Heart right ventricle (tissue), 16 donors: ENCODE measurements at regions of chr1 and their contacts with region 1.

Region 1: DNA sequence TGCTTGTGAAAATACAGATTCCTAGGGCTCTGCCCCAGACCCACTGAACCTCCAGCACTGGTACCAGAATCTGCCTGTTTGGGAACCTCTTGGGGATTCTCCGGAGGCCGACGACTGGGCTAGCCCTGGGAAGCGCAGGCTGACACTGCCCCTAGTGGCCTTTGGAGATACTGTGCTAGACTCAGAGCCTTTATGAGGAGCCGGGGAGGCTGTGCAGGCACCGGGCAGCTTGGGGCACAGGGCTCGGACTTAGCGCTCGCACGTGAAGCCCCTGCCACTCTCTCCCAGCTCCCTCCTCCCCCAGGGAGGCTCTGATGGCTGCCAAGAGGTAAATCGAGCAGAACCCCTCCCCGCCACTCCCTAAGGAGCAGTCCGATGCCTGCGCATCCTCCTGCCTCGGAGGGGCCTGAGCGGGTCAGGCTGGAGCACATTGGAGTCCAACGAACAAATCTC is 144.6 kb upstream of the TNR start:
- DNase-seq: peak; percentile 52 to 61
- ATAC-seq: peak; percentile 85 to 92 (median 88)
- H3K4me3 ChIP-seq: no peak overlapping the region
- H3K27ac ChIP-seq: no peak overlapping the region
- H3K4me1 ChIP-seq: peaks cover 0 to 13% (median 0%) of the 10 kb centered on the region in 9 donors
- H3K27me3 ChIP-seq: no peaks in the 10 kb centered on the region
- CTCF ChIP-seq: peak; percentile 63 to 85 (median 81)

Region 2: DNA sequence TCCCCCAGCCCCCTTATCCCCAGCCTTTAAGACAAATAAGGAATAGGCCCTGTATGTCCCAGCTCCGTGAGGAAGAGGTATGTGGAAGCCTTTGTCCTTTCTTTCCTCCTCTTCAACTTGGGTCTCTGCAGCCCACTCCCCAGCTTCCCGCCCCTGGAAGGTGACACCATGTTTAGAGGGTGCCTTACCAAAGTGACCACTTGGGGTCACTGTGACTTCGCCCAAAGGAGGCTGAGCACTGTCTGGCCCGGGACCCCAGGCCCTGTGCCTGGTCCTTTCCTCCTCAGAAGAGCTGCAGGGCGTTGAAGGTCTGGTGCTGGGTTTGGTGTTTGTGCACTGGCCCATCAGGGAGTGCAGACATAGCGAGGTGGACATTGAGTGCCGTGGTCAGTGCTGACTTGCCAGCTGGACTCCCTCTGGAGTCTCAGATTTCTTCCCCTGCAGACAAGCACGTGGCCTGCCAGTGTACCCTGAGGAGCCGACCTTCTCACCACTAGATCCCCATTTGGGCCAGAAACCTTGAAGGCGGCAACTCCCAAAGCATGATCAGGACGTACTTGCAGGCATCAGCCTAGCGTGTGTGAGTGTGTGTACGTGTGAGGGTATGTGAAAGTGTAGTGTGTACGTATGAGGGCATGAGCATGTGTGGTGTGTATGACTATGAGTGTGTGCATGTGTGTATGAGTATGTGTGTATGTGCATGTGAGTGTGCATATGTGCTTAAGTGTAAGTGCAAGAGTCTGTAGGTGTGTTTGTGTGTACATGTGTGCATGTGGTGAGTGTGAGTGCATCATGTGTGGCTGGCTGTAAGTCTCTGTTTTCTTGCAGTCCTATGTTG is 514.0 kb before region 1 on chr1:
- intact Hi-C with region 1: loop called in 2 of 10 experiments (anchors 5 kb)
- DNase-seq: no peak
- ATAC-seq: peak in 6 of 8 donors; percentile 52 to 75 (median 62)
- H3K4me3 ChIP-seq: no peak overlapping the region
- H3K27ac ChIP-seq: no peak overlapping the region
- H3K4me1 ChIP-seq: peaks cover 0 to 4% (median 0%) of the 10 kb centered on the region in 9 donors
- H3K27me3 ChIP-seq: peaks cover 0 to 13% (median 0%) of the 10 kb centered on the region in 7 donors
- CTCF ChIP-seq: peak; percentile 46 to 77 (median 69)

Region 3: GRCh38 chr1:175388285-175388684 is 499.7 kb before region 1 on chr1:
- intact Hi-C with region 1: loop called in 1 of 10 experiments (anchors 10 kb)
- DNase-seq: no peak
- ATAC-seq: no peak
- H3K4me3 ChIP-seq: no peak overlapping the region
- H3K27ac ChIP-seq: no peak overlapping the region
- H3K4me1 ChIP-seq: no peaks in the 10 kb centered on the region
- H3K27me3 ChIP-seq: peaks cover 0 to 6% (median 0%) of the 10 kb centered on the region in 7 donors
- CTCF ChIP-seq: no peak

Region 4: DNA sequence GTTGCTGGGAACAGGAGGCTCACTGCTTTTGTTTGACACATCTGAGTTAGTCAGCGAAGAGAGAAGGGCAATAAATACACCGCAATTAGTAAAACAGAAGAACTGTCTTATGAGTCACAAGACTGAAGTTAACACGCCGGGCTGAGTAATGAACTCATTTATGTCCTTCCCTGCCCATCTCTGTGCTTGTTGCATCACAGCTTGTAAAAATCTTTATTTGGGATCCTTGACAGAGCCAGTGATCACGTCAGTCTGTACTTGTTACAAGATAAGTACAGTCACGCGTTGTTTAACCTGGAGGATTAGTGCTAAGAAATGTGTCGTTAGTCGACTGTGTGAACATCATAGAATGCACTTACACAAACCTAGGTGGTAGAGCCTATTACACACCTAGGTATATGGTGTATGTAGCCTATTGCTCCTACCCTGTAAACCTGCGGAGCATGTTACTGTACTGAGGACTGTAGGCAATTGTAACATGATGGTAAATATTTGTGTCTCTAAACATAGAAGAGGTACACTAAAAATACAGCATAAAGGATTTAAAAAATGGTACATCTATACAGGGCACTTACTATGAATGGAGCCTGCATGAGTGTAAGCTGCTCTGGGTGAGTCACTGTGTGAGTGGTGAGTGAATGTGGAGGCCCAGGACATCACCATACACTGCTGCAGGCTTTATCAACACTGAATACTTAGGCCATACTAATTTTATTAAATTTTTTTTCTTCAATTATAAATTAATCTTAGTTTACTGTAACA is 416.8 kb before region 1 on chr1:
- intact Hi-C with region 1: loop called in 2 of 10 experiments (anchors 10 kb)
- DNase-seq: no peak
- ATAC-seq: no peak
- H3K4me3 ChIP-seq: no peak overlapping the region
- H3K27ac ChIP-seq: no peak overlapping the region
- H3K4me1 ChIP-seq: no peaks in the 10 kb centered on the region
- H3K27me3 ChIP-seq: peaks cover 0 to 15% (median 5%) of the 10 kb centered on the region in 7 donors
- CTCF ChIP-seq: no peak

Region 5: DNA sequence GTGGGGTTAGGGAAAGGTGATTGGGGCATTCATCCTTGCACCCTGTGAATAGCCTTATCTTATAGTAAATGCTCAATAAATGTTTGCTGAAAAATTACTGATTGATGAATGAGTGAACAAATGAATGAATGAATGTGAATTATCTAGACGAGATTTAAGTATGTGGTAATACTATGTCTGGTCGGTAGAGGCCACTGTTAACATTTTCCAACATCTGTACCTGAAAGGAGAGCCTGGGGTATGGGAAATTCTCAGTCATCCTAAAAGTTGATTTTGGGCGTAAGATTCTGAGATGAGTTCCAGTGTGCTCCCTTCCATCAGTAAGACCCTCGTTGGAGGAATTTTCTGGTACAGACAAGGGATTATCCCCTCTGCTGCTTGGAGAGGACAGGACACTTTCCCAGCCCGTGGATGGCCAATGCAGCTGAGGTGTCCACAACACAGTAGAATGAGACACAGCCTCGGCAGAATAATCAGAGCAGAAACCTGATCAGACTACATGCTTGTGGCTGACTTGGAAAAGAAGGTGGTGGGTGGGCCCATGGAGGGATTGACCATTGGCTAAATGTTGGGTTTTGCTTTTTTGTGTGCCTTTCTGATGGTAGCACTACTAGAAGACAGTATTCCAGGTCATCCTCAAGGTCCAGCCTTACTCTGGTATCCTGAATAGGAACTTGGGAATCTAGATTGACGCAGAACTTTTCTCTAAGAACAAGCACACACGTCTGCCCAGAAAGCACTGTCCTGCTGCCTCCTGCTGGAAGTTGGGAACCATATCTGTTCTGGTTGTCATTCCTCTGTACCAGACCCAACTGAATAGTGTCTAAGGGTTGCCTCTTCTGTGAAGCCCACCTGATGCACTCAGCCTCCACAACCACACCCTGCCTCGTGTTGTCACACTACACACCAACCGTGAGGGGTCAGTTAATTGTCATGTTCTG is 406.6 kb before region 1 on chr1:
- intact Hi-C with region 1: loop called in 9 of 10 experiments (anchors 5 to 10 kb)
- DNase-seq: no peak
- ATAC-seq: peak in 5 of 8 donors; percentile 44 to 62 (median 52)
- H3K4me3 ChIP-seq: no peak overlapping the region
- H3K27ac ChIP-seq: no peak overlapping the region
- H3K4me1 ChIP-seq: peaks cover 0 to 4% (median 0%) of the 10 kb centered on the region in 9 donors
- H3K27me3 ChIP-seq: peaks cover 0 to 13% (median 0%) of the 10 kb centered on the region in 7 donors
- CTCF ChIP-seq: peak; percentile 37 to 71 (median 66)

Region 6: DNA sequence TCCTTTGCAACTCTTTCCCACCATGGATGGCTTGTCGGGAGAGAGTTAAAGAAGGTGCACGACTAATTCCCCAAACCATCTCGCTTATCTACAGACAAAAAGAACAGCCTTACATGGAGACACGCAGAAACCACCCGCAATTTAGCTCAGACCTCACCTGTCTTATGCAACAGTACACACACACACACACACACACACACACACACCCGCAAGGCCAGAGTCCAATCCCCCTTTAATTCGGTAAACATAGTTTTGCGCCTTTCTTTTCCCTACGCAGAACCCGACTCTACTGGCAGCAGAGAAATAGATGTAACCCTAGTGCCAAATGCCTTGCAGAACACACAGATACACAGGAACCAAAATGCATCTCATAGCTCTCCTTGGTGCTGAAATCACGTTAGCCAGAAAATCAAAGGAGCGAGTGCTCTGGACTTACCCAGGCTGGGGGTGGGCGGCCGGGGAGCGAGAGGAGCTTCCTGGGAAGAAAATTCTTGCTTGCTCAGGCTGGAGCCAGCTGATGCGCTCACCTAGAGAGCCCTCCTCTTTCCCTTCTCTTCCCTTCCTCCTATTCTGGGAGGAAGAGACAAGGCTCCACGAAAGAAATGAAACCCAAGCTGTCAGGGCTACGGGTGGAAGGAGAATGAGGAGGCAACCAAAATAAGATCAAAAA is 145.1 kb before region 1 on chr1:
- intact Hi-C with region 1: loop called in 1 of 10 experiments (anchors 10 kb)
- DNase-seq: peak in 1 of 2 donors; percentile 6
- ATAC-seq: peak in 6 of 8 donors; percentile 38 to 74 (median 58)
- H3K4me3 ChIP-seq: no peak overlapping the region
- H3K27ac ChIP-seq: no peak overlapping the region
- H3K4me1 ChIP-seq: peaks cover 0 to 4% (median 0%) of the 10 kb centered on the region in 9 donors
- H3K27me3 ChIP-seq: peaks cover 0 to 49% (median 13%) of the 10 kb centered on the region in 7 donors
- CTCF ChIP-seq: no peak

Region 7: GRCh38 chr1:176252191-176252590 is 364.2 kb after region 1 on chr1:
- intact Hi-C with region 1: no loop called
- DNase-seq: no peak
- ATAC-seq: no peak
- H3K4me3 ChIP-seq: no peak overlapping the region
- H3K27ac ChIP-seq: no peak overlapping the region
- H3K4me1 ChIP-seq: no peaks in the 10 kb centered on the region
- H3K27me3 ChIP-seq: no peaks in the 10 kb centered on the region
- CTCF ChIP-seq: no peak